Activated CD8-positive, alpha-beta T cell treated with anti-CD3 and anti-CD28 coated beads, Interleukin-2, amount 10 ng/mL, durations not matched to agents 7 days and 5 days (primary cell): ENCODE measurements at regions of chr16 and their contacts with region 1.

Region 1: DNA sequence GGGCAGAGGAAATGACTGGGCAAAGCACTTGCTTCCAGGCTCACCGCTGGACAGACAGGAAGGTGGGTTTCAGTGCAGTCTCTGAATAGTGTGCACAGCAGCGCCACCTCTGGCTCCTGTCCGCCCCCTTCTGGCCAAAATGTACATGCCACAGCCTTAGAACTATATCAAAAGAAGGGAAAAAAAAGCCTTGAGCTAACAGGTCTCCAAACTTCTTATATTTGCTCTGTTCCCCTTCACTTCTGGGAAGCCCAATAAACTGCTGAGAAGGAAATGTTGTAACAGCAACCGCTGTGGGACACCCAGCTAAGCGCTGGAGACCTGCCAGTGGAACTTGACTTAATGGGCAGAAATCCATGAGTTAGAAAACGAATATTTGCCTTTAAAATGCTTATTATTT is 17.5 kb downstream of the COG7 start:
- DNase-seq: peak; percentile 81
- ATAC-seq: peak; percentile 95
- H3K4me3 Mint-ChIP-seq: no peak overlapping the region
- H3K27ac Mint-ChIP-seq: no peak overlapping the region
- H3K4me1 Mint-ChIP-seq: no peaks in the 10 kb centered on the region
- H3K27me3 Mint-ChIP-seq: no peaks in the 10 kb centered on the region

Region 2: DNA sequence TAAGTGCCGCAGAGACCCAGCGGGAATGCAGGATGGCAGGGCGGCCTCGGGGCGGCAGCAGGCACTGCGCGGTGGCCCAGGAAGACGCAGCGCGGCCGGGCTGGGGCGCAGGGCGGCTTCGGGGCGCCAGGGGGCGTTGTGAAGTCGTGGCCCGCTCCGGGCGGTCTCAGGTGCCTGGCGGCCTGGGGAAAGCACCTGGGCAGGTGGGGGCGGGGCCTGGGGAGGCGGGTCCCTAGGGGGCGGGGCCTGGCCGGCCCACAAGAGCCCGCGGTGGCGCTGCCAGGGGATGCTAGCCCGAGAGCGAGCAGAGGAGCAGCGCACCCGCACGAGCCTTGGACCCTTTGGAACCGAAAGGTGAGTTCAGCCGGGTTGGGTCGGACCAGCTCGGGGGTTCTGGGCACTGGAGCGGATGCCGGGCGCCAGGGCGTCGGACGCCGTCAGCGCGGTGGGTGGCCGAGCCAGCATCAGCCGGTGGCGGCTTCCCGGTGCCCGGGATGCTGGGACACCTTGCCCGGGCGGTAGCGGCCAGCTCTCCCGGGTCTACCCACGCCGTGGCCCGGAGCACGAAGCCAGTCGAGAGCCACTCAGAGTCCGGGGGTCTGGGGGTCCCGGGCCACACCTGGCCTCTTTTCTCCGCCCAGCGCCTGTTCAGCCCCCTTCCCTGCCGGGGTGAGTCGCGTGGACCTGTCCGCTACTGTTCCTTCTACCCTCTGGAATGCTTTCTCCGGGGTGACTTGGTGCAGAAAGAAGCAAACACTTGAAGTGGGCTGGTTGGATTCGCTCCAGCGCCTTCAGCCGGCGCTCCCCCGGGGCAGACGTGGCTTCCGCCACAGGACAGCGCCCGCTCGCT is 252.8 kb before region 1 on chr16 and contains the start of gene SCNN1G:
- CTCF ChIA-PET with region 1: interaction called, 101 read pairs
- POLR2A ChIA-PET with region 1: no interaction called
- DNase-seq: peak; percentile 78
- ATAC-seq: peak; percentile 99
- H3K4me3 Mint-ChIP-seq: peak within 1 kb of the TSS; percentile 18
- H3K27ac Mint-ChIP-seq: no peak within 1 kb of the TSS
- H3K4me1 Mint-ChIP-seq: peaks cover 9% of the 10 kb centered on the region
- H3K27me3 Mint-ChIP-seq: peaks cover 32% of the 10 kb centered on the region
- total RNA-seq, gene SCNN1G: not detected

Region 3: GRCh38 chr16:23384878-23385277 is 50.6 kb before region 1 on chr16:
- CTCF ChIA-PET with region 1: no interaction called
- POLR2A ChIA-PET with region 1: no interaction called
- DNase-seq: no peak
- ATAC-seq: no peak
- H3K4me3 Mint-ChIP-seq: no peak overlapping the region
- H3K27ac Mint-ChIP-seq: no peak overlapping the region
- H3K4me1 Mint-ChIP-seq: no peaks in the 10 kb centered on the region
- H3K27me3 Mint-ChIP-seq: no peaks in the 10 kb centered on the region

Region 4: DNA sequence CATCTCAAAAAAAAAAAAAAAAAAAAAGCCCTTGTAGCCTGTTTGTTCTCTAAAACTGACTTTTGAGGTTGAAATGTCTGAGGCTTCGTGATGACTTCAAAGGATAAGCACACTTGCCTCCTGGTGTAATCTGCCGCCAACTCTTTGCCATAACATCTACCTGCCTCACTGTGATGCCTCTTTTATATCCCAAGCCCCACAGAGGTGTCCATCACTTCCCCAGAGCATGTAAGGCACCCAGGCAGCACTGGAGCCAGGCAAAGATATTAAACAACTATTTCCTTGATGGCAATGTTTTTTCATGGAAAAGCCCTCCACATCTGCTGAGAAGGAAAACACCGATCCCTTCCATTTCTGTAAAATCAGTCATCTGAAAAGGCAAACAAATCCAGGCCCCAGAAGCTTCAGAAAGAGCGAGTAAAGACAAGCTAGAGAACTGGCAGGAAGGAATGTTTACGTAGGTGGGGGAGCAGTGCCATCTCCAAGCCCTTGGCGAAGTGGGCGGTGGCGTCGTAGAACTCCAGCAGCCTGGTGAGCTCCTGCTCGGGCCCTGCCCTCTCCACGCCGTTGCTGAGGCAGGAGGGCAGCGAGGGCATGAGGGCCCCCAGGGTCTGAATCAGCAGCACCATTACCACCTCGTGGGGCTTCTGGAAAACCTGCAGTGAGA is 11.1 kb before region 1 on chr16:
- CTCF ChIA-PET with region 1: interaction called, 26 read pairs
- POLR2A ChIA-PET with region 1: no interaction called
- DNase-seq: no peak
- ATAC-seq: no peak
- H3K4me3 Mint-ChIP-seq: no peak overlapping the region
- H3K27ac Mint-ChIP-seq: no peak overlapping the region
- H3K4me1 Mint-ChIP-seq: no peaks in the 10 kb centered on the region
- H3K27me3 Mint-ChIP-seq: no peaks in the 10 kb centered on the region

Region 5: GRCh38 chr16:23504451-23505179 is 69.1 kb after region 1 on chr16:
- CTCF ChIA-PET with region 1: interaction called, 21 read pairs
- POLR2A ChIA-PET with region 1: no interaction called
- DNase-seq: peak; percentile 84
- ATAC-seq: peak; percentile 80
- H3K4me3 Mint-ChIP-seq: peak overlapping the region; percentile 34
- H3K27ac Mint-ChIP-seq: peak overlapping the region; percentile 81
- H3K4me1 Mint-ChIP-seq: peaks cover 70% of the 10 kb centered on the region
- H3K27me3 Mint-ChIP-seq: no peaks in the 10 kb centered on the region